ENCODE measurements at regions of chr10 and their contacts with region 1.

Region 1: GRCh38 chr10:22316285-22317120 is at the start of gene COMMD3:
- DNase-seq: peak; percentile 80
- H3K4me3 Mint-ChIP-seq: peak within 1 kb of the TSS; percentile 86
- H3K27ac Mint-ChIP-seq: peak within 1 kb of the TSS; percentile 98
- H3K4me1 Mint-ChIP-seq: no peaks in the 10 kb centered on the region
- H3K27me3 Mint-ChIP-seq: no peaks in the 10 kb centered on the region
- CTCF ChIP-seq: no peak
- total RNA-seq, gene COMMD3: 28.9 and 39.5 TPM in 2 replicates

Region 2: GRCh38 chr10:21953585-21954057 is 362.9 kb before region 1 on chr10:
- CTCF ChIA-PET with region 1: no interaction called
- intact Hi-C with region 1: no loop called
- DNase-seq: no peak
- H3K4me3 Mint-ChIP-seq: no peak overlapping the region
- H3K27ac Mint-ChIP-seq: no peak overlapping the region
- H3K4me1 Mint-ChIP-seq: no peaks in the 10 kb centered on the region
- H3K27me3 Mint-ChIP-seq: no peaks in the 10 kb centered on the region
- CTCF ChIP-seq: no peak

Region 3: GRCh38 chr10:22003079-22003913 is 313.2 kb before region 1 on chr10 and contains the start of gene DNAJC1:
- CTCF ChIA-PET with region 1: interaction called, 3 read pairs
- intact Hi-C with region 1: loop called (anchors 5 kb)
- DNase-seq: peak; percentile 98
- H3K4me3 Mint-ChIP-seq: peak within 1 kb of the TSS; percentile 79
- H3K27ac Mint-ChIP-seq: peak within 1 kb of the TSS; percentile 82
- H3K4me1 Mint-ChIP-seq: peaks cover 12% of the 10 kb centered on the region
- H3K27me3 Mint-ChIP-seq: peaks cover 19% of the 10 kb centered on the region
- CTCF ChIP-seq: no peak
- total RNA-seq, gene DNAJC1: 15.9 and 17.0 TPM in 2 replicates

Region 4: DNA sequence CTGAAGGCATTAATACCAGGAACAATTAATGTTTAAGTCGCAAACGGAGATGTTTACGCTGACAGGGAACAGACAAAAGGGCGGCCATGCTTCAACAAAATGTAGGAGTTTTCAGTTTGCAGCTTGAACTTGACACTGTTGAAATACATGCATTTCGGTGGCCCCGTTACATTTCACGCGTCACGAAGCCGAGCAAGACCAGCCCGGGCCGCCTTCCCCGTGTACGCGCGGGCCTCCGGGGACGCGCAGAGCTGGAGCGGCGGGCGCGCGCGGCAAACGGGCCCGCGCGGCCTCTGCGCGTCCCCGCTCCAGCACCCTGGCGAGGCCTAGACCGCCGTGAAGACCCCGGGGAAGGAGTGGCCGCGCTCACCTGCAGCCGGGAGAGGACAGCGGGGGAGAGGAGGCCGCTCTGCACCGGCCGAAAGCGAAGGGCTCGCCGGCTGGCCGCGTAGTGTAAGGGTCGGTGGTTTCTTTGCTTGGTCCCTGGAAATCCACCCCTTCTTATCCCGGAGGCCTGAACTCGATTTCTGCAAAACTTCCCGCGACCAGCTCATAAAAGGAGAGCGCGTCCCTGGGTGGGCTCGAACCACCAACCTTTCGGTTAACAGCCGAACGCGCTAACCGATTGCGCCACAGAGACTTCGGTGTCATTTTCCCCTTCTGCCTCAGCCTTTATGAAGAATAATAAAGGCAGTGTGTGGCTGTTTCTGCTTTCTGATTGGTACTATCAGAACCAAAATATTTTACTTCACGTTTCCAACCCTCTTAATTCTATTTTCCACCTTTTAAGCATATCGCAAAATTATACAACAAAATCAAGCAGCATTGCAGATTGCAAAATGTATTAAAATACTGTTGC is 87.3 kb before region 1 on chr10:
- CTCF ChIA-PET with region 1: interaction called, 3 read pairs
- intact Hi-C with region 1: loop called (anchors 5 kb)
- DNase-seq: peak; percentile 88
- H3K4me3 Mint-ChIP-seq: peak overlapping the region; percentile 76
- H3K27ac Mint-ChIP-seq: peak overlapping the region; percentile 95
- H3K4me1 Mint-ChIP-seq: no peaks in the 10 kb centered on the region
- H3K27me3 Mint-ChIP-seq: no peaks in the 10 kb centered on the region
- CTCF ChIP-seq: no peak

Region 5: DNA sequence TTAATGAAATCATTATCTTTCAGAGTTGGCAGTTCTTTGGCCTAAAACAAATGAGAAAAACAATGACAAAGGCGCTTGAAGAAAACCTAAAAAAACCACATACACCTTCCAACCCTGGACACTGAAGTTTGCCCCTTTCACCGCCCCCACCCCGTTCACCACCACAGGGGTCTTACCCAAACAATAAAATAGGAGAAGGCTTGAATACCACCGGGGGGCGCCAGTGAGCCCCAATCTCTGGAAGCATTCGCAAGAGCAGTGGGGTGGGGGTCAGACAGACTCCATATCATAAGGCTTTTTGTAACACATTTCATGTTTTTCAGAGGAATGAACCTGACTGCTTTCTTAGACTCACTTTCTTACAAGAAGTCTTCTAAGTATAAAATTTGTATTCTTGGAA is 234.2 kb after region 1 on chr10:
- CTCF ChIA-PET with region 1: no interaction called
- intact Hi-C with region 1: loop called (anchors 5 kb)
- DNase-seq: peak; percentile 61
- H3K4me3 Mint-ChIP-seq: no peak overlapping the region
- H3K27ac Mint-ChIP-seq: no peak overlapping the region
- H3K4me1 Mint-ChIP-seq: no peaks in the 10 kb centered on the region
- H3K27me3 Mint-ChIP-seq: no peaks in the 10 kb centered on the region
- CTCF ChIP-seq: peak; percentile 78